GM10248 (cell line): ENCODE measurements at regions of chr6 and their contacts with region 1.

Region 1: DNA sequence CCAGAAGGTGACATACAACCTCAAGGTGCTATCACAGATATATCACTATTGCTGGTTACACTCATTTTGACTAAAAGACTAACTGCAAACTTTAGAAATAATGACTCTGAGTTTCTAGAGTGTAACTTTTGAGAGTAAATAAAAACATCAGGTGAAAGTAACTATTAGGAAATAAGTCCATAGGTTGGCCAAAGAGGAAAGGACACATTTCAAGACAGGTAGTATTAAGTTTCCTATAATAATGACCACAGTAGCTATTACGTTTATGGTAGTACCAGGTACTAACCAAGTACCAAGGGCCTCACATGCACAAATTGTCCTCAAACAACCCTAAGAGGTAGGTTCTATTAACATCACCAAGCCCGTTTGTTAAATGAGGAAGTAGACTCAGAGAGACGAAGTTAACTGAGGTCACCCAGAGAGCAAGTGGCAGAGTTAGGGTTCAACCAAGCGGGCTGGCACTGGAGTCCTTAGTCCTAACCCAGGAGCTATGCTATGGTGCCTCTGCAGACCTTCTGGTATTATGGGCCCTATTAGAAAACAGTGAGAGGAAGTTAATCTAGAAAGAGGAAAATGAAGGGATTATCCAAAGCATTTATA is 36.8 kb downstream of the HEBP2 start:
- DNase-seq: no peak
- CTCF ChIP-seq: no peak

Region 2: GRCh38 chr6:138428944-138429598 is 11.8 kb before region 1 on chr6:
- CTCF ChIA-PET with region 1: interaction called, 21 read pairs
- POLR2A ChIA-PET with region 1: no interaction called
- DNase-seq: peak; percentile 56
- CTCF ChIP-seq: peak; percentile 37